A673 (cell line): ENCODE measurements at regions of chr12 and their contacts with region 1.

Region 1: GRCh38 chr12:24307716-24308335 is 358.4 kb upstream of the SOX5 start:
- DNase-seq: peak; percentile 93
- H3K4me3 ChIP-seq: no peak overlapping the region
- H3K27ac ChIP-seq: peak overlapping the region; percentile 99
- H3K4me1 ChIP-seq: peaks cover 54% of the 10 kb centered on the region
- H3K27me3 ChIP-seq: no peaks in the 10 kb centered on the region
- CTCF ChIP-seq: no peak

Region 2: DNA sequence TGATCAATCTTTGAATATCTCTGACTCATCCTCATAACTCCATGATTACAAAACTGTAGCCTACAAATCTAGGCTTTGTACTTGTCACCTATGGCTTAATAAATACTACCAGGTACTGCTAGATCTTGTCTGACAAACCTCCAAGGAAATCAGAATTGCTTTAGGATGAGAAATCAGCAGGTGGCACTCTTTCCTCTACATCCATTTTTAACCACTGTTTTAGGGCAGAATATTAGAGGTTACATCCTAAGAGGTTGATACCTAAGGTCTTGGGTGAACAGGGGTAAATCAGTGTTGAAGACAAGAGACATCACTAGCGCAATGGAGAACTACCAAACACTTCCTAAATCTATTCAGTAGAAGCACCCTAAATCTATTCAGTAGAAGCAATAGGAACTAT is 295.3 kb before region 1 on chr12:
- CTCF ChIA-PET with region 1: no interaction called
- POLR2A ChIA-PET with region 1: no interaction called
- intact Hi-C with region 1: loop called (anchors 10 kb)
- DNase-seq: peak; percentile 45
- H3K4me3 ChIP-seq: no peak overlapping the region
- H3K27ac ChIP-seq: no peak overlapping the region
- H3K4me1 ChIP-seq: no peaks in the 10 kb centered on the region
- H3K27me3 ChIP-seq: no peaks in the 10 kb centered on the region
- CTCF ChIP-seq: peak; percentile 45

Region 3: GRCh38 chr12:24561882-24562760 is 254.3 kb after region 1 on chr12:
- CTCF ChIA-PET with region 1: no interaction called
- POLR2A ChIA-PET with region 1: no interaction called
- intact Hi-C with region 1: loop called (anchors 5 kb)
- DNase-seq: peak; percentile 85
- H3K4me3 ChIP-seq: peak overlapping the region; percentile 81
- H3K27ac ChIP-seq: peak overlapping the region; percentile 87
- H3K4me1 ChIP-seq: peaks cover 45% of the 10 kb centered on the region
- H3K27me3 ChIP-seq: no peaks in the 10 kb centered on the region
- CTCF ChIP-seq: 0 out of 2 replicates have a peak, but pooled peaks have one; percentile 12

Region 4: GRCh38 chr12:24728366-24728765 is 420.5 kb after region 1 on chr12:
- CTCF ChIA-PET with region 1: no interaction called
- POLR2A ChIA-PET with region 1: no interaction called
- intact Hi-C with region 1: loop called (anchors 5 kb)
- DNase-seq: peak; percentile 63
- H3K4me3 ChIP-seq: no peak overlapping the region
- H3K27ac ChIP-seq: no peak overlapping the region
- H3K4me1 ChIP-seq: peaks cover 12% of the 10 kb centered on the region
- H3K27me3 ChIP-seq: no peaks in the 10 kb centered on the region
- CTCF ChIP-seq: peak; percentile 81

Region 5: DNA sequence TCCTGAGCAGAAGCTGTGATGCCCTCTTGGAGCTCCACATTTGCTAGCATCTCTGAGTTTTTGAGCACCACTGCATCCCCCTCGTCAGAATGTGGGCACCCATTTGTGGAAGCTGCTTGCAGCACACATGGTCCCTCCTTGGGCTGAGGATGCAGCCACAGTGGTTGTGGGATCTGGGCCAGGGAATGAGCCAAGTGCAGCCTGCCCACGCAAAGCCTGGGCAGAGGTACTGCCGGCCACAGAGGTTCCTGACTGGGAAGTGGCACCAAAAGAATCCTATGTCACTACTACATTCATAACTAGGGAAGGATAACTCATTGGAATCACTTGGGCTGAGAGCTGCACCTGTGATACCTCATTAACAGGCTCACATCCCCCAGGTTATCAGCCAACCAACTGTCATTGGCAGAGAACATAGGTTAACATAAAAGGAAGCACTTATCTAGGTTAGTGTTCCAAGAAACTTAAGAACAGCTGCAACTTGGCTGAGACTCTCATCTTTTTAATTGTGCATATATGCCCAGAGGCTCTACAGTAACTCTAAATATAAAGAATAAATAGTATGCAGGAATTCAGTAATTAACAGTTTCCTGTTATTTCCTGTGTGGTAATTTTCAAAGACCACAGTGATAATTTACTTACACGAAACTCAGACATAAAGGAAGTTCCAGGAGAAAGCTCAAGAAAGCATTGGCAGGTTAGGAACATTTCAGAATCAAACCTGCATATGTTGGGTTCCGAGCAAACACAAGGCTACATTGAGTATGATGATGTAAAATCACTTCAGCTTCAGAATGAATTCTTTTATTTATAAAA is 495.8 kb after region 1 on chr12:
- CTCF ChIA-PET with region 1: no interaction called
- POLR2A ChIA-PET with region 1: interaction called, 3 read pairs
- intact Hi-C with region 1: loop called (anchors 5 kb)
- DNase-seq: peak; percentile 94
- H3K4me3 ChIP-seq: no peak overlapping the region
- H3K27ac ChIP-seq: peak overlapping the region; percentile 84
- H3K4me1 ChIP-seq: peaks cover 21% of the 10 kb centered on the region
- H3K27me3 ChIP-seq: no peaks in the 10 kb centered on the region
- CTCF ChIP-seq: no peak